Activated B cell treated with CpG ODN at 0.5 μM for 24 hours (primary cell): ENCODE measurements at regions of chr2 and their contacts with region 1.

Region 1: DNA sequence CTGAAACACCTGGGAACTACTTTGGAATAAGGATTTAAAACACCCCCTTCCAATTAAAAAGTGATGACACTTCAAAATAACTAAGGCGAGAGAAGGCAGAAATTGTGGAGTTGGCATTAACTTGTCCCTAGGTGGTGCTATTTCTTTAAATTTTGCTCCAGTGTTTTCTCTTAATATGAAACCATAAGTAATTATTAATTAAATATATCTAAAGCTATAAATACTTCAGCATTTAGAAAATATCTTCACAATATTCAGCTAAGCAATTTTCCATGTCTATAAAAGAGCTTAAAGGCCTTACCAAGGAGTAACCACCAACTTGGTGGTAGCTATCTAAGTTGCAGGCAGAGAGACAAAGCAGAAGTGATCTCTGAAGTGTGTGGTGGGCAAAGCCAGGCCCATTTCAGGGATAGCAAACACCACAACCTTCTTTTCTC is 186.8 kb upstream of the PGAP1 start:
- DNase-seq: no peak
- ATAC-seq: peak; percentile 68
- H3K4me3 Mint-ChIP-seq: no peak overlapping the region
- H3K27ac Mint-ChIP-seq: peak overlapping the region; percentile 77
- H3K4me1 Mint-ChIP-seq: peaks cover 34% of the 10 kb centered on the region
- H3K27me3 Mint-ChIP-seq: no peaks in the 10 kb centered on the region
- CTCF ChIP-seq: no peak

Region 2: DNA sequence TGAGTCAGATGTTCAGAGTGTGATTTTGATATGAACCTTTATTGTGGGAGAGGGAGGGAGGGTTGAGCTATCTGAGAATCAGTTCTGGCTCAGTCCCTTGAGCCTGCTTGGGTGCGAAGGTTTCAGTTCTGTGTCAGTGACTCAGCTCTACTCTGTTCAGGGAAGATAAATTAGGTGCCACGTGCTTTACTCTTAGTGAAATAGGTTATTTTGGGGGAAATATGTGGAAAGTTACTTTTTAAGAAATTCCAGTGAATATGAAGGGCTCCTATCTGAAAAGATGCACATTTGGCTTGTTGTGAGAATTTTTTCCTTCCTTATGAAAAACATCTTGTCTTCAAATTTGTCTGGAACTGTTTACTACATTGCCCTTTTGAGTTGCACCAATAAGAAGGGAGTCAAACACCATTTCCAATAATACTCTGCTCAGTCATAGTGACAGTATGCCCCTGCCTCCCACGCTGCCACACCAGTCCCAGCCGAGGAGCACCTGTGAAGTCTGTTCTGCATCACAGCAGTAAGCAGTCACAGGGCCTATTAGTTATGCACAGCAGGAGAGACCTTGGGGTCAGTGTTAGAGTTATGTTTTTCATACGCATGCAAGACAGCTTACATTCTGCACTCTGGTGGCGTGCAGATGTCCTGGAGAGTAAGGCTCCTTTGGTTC is 1011.8 kb before region 1 on chr2:
- CTCF ChIA-PET with region 1: no interaction called
- POLR2A ChIA-PET with region 1: no interaction called
- intact Hi-C with region 1: no loop called
- DNase-seq: peak; percentile 34
- ATAC-seq: peak; percentile 87
- H3K4me3 Mint-ChIP-seq: peak overlapping the region; percentile 40
- H3K27ac Mint-ChIP-seq: peak overlapping the region; percentile 81
- H3K4me1 Mint-ChIP-seq: peaks cover 77% of the 10 kb centered on the region
- H3K27me3 Mint-ChIP-seq: no peaks in the 10 kb centered on the region
- CTCF ChIP-seq: no peak

Region 3: DNA sequence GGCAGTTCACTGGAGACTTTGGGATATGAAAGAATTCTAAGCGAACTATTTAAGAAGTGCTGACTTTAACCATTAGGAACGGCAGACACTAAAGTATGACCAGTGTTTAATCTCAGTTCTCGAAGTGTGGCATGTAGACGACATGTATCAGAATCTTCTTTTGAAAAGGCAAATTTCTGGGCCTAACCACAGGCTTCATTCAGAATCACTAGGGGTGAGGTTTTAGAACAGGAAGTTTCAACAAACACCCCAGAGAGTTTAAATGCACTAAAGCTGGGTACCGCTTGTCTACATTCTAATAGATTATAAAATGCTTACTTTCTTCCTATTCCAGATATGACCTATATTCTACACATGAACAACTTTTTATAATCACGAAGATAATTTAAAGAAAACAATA is 17.0 kb after region 1 on chr2:
- CTCF ChIA-PET with region 1: interaction called, 28 read pairs
- POLR2A ChIA-PET with region 1: interaction called, 7 read pairs
- intact Hi-C with region 1: loop called (anchors 1 kb)
- DNase-seq: no peak
- ATAC-seq: peak; percentile 69
- H3K4me3 Mint-ChIP-seq: peak overlapping the region; percentile 82
- H3K27ac Mint-ChIP-seq: peak overlapping the region; percentile 98
- H3K4me1 Mint-ChIP-seq: peaks cover 71% of the 10 kb centered on the region
- H3K27me3 Mint-ChIP-seq: no peaks in the 10 kb centered on the region
- CTCF ChIP-seq: no peak

Region 4: GRCh38 chr2:197145471-197146138 is 32.3 kb after region 1 on chr2:
- CTCF ChIA-PET with region 1: interaction called, 22 read pairs
- POLR2A ChIA-PET with region 1: interaction called, 4 read pairs
- intact Hi-C with region 1: no loop called
- DNase-seq: no peak
- ATAC-seq: peak; percentile 91
- H3K4me3 Mint-ChIP-seq: peak overlapping the region; percentile 67
- H3K27ac Mint-ChIP-seq: peak overlapping the region; percentile 97
- H3K4me1 Mint-ChIP-seq: peaks cover 91% of the 10 kb centered on the region
- H3K27me3 Mint-ChIP-seq: no peaks in the 10 kb centered on the region
- CTCF ChIP-seq: no peak

Region 5: DNA sequence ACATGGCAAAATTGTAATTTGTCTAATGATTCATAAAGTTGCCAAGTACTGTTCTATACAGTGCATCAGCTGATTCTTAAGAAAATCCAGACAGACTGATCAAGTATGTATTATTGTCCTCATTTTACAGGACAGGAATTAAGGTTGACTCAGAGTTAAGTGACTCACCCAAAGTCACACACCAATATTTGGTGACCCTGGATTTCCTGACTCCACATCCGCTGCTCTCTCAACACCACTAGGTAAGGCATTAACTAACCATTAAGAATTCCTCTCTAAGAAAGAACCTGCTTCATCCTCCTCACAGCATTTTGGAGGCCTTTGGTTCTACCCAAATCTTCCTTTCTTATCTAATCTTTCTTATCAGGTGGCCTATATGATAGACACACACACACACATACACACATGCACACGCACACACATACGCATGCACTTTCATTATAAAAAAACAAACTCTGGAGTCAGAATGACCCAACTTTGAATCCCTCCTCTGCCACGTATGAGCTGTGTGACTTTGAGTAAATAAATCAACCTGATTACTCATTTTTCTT is 46.4 kb after region 1 on chr2:
- CTCF ChIA-PET with region 1: interaction called, 27 read pairs
- POLR2A ChIA-PET with region 1: interaction called, 3 read pairs
- intact Hi-C with region 1: no loop called
- DNase-seq: no peak
- ATAC-seq: peak; percentile 53
- H3K4me3 Mint-ChIP-seq: peak overlapping the region; percentile 64
- H3K27ac Mint-ChIP-seq: peak overlapping the region; percentile 90
- H3K4me1 Mint-ChIP-seq: peaks cover 93% of the 10 kb centered on the region
- H3K27me3 Mint-ChIP-seq: no peaks in the 10 kb centered on the region
- CTCF ChIP-seq: no peak

Region 6: GRCh38 chr2:197184959-197185586 is 71.8 kb after region 1 on chr2:
- CTCF ChIA-PET with region 1: interaction called, 69 read pairs
- POLR2A ChIA-PET with region 1: no interaction called
- intact Hi-C with region 1: no loop called
- DNase-seq: no peak
- ATAC-seq: peak; percentile 40
- H3K4me3 Mint-ChIP-seq: no peak overlapping the region
- H3K27ac Mint-ChIP-seq: peak overlapping the region; percentile 31
- H3K4me1 Mint-ChIP-seq: peaks cover 71% of the 10 kb centered on the region
- H3K27me3 Mint-ChIP-seq: no peaks in the 10 kb centered on the region
- CTCF ChIP-seq: no peak

Region 7: DNA sequence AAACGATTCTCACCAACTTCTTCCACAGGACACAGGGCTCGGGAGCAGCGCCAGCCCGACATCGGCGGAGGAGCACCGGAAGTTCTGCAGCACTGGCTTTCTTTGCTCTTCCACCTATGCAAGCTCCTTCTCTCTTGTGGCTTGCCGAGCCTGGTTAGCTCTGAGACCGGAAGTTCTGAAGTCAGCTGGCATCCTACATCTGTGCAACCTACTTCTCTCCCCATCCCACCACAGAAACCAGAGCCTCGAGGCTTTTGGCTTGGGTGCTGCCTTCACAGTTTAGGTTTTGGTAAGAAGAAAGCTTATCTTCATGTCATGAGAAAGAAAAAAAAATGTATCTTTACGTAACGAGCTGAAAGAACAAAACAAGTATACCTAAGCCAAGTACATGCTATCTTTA is 85.6 kb after region 1 on chr2:
- CTCF ChIA-PET with region 1: interaction called, 20 read pairs
- POLR2A ChIA-PET with region 1: no interaction called
- intact Hi-C with region 1: no loop called
- DNase-seq: peak; percentile 56
- ATAC-seq: peak; percentile 94
- H3K4me3 Mint-ChIP-seq: peak overlapping the region; percentile 88
- H3K27ac Mint-ChIP-seq: peak overlapping the region; percentile 96
- H3K4me1 Mint-ChIP-seq: peaks cover 83% of the 10 kb centered on the region
- H3K27me3 Mint-ChIP-seq: no peaks in the 10 kb centered on the region
- CTCF ChIP-seq: no peak

Region 8: GRCh38 chr2:197255543-197255942 is 142.2 kb after region 1 on chr2:
- CTCF ChIA-PET with region 1: interaction called, 4 read pairs
- POLR2A ChIA-PET with region 1: no interaction called
- intact Hi-C with region 1: loop called (anchors 2 kb)
- DNase-seq: peak; percentile 74
- ATAC-seq: peak; percentile 95
- H3K4me3 Mint-ChIP-seq: peak overlapping the region; percentile 77
- H3K27ac Mint-ChIP-seq: peak overlapping the region; percentile 94
- H3K4me1 Mint-ChIP-seq: peaks cover 78% of the 10 kb centered on the region
- H3K27me3 Mint-ChIP-seq: no peaks in the 10 kb centered on the region
- CTCF ChIP-seq: no peak